AG04449 (cell line): ENCODE measurements at regions of chr9 and their contacts with region 1.

Region 1: DNA sequence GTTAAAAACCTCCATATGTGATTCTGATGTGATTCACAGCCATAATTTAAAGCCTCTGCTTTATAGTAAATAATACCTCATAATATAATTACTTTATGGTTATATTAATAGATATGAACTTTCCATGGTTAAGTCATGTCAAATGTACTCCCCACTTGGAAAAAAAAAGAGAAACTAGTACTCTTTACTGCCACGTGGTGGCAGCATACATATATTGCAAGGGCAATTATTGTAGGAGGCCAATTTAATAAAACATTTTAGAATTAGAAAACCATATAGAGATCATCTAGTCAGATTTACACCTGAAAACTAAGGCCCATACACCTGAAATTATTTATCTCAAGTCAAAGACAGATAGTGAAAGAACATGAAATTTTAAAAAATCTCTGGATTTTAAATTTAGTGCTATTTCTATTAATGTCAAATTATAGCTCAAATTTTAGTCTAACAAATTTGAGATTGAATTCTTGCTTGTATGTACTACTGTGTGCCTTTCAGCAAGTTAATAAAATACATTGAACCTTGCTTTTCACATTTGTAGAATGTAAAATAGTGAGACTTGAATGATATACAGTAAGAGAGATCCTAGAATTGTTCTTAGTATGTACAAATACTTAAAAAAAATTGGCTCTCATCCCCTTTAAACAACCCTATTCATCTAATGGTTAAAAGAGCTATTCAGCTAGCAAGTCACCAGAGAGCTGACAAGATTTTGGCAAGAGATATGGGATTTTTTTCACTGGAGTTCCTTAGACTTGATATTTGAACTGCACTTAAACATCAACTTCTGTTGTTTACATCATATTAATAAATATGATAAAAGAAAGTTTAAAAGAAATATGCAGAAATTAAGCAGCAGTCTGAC is 603.8 kb downstream of the TLE4 start:
- DNase-seq: no peak
- H3K4me3 ChIP-seq: no peak overlapping the region
- CTCF ChIP-seq: peak; percentile 45

Region 2: GRCh38 chr9:80163889-80164288 is 11.6 kb before region 1 on chr9:
- CTCF ChIA-PET with region 1: interaction called, 16 read pairs
- POLR2A ChIA-PET with region 1: no interaction called
- DNase-seq: no peak
- H3K4me3 ChIP-seq: no peak overlapping the region
- CTCF ChIP-seq: no peak

Region 3: GRCh38 chr9:80191108-80191507 is 15.6 kb after region 1 on chr9:
- CTCF ChIA-PET with region 1: interaction called, 18 read pairs
- POLR2A ChIA-PET with region 1: no interaction called
- DNase-seq: no peak
- H3K4me3 ChIP-seq: no peak overlapping the region
- CTCF ChIP-seq: no peak

Region 4: DNA sequence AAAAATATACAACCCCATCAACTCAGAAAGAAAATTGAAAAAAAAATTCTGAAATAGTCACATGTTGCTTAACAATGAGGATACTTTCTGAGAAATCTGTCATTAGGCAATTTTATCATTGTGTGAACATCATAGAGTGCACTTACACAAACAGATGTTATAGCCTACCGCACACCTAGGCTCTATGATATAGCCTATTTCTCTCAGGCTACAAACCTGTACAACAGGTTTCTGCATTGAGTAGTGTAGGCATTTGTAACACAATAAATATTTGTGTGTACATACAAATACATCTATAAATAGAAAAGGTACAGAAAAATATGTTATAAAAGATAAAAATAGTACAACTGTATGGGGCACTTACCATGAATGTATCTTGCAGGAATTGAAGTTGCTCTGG is 216.4 kb after region 1 on chr9:
- CTCF ChIA-PET with region 1: no interaction called
- POLR2A ChIA-PET with region 1: no interaction called
- DNase-seq: no peak
- H3K4me3 ChIP-seq: no peak overlapping the region
- CTCF ChIP-seq: no peak